ENCODE measurements at regions of chrX and their contacts with region 1.

Region 1: DNA sequence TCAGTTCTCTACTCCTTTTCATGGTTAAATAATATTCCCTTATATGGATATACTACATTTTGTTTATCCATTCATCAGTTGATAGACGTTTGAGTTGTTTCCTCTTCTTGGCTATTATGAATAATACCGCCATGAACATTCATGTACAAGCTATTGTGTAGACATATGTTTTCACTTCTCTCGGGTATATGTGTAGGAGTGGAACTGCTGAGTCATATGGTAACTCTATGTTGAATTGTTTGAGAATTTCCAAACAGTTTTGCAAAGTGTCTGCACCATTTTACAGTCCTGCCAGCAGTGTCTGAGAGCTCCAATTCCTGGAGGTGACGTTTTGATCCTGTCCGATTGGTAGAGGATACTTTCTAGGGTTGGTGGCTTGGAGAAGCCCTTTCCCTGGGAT is 23.6 kb downstream of the PLAC1 start:
- DNase-seq: no peak
- H3K4me3 Mint-ChIP-seq: no peak overlapping the region
- H3K27ac Mint-ChIP-seq: peak overlapping the region; percentile 45
- H3K4me1 Mint-ChIP-seq: peaks cover 4% of the 10 kb centered on the region
- H3K27me3 Mint-ChIP-seq: peaks cover 3% of the 10 kb centered on the region

Region 2: DNA sequence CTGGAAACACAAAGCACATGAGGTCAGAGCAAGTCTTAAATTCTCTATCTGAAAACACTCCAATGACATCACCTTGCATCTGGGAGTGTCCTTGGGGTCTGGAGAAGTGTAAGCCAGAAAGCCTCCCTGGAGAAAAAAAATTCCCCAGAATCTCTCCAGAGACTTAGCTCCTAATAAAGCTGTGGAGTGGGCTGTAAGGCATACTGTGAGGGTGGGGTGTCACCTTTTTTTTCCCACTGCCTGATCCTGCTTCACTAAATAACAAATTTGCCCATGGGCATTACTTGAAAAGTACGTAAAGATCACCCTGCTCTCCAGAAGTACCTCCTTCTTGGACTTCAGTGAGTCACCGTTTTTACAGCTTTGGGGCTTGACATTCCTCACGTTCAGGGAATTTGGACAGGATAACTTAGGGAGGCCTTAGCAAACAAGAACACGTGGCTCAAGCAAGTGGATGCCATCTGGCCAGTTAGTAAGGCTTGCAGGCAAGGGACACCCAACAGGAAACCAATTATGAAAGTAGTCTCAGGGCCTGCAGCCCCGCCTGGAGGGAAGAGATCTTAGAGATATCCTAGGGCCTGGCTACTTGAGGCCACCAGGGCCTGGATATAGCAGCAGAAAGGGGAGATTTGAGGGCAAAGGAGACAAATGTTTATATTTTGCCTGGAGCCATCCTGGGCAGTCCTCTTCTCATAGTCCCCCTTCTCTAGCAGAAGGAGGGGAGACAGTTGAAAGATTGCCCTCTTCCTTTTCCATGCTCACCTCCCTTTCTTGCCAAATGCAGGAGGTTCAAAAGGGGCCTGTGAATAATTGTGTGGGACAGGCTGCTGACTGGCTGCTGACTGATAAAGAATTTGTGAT is 83.6 kb after region 1 on chrX:
- intact Hi-C with region 1: loop called (anchors 1 kb)
- DNase-seq: peak; percentile 54
- H3K4me3 Mint-ChIP-seq: no peak overlapping the region
- H3K27ac Mint-ChIP-seq: peak overlapping the region; percentile 52
- H3K4me1 Mint-ChIP-seq: peaks cover 10% of the 10 kb centered on the region
- H3K27me3 Mint-ChIP-seq: peaks cover 1% of the 10 kb centered on the region

Region 3: DNA sequence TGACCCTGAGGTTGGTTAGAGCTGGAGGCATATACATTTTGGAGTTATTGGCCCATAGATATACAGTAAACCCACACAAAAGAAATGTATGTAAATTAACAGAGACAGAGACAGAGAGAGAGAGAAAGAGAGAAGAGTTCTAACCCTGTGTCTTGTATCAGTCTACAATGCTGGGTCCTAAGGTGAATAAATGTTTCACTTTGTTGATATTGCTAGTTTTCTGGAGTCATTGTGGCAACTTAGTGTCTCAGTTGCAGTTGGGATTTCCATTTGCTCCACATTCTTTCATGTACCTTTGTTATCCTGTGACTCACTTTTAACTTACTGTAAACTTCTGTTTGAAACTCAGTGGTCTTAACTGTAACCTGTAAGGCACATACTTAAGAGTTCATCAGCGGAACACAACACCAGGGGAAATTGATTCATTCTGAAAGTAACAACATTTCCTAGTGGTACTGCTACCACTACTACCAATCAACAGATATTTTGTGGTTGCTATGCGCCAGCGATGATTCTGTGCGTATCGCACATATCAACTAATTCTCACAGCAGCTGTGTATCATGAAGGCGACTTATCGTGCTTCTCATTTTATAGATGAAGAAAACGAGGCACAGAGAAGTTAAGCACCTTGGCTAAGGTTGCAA is 578.6 kb after region 1 on chrX:
- intact Hi-C with region 1: no loop called
- DNase-seq: peak; percentile 86
- H3K4me3 Mint-ChIP-seq: peak overlapping the region; percentile 62
- H3K27ac Mint-ChIP-seq: peak overlapping the region; percentile 75
- H3K4me1 Mint-ChIP-seq: peaks cover 22% of the 10 kb centered on the region
- H3K27me3 Mint-ChIP-seq: no peaks in the 10 kb centered on the region